ENCODE measurements at regions of chr11 and their contacts with region 1.

Region 1: DNA sequence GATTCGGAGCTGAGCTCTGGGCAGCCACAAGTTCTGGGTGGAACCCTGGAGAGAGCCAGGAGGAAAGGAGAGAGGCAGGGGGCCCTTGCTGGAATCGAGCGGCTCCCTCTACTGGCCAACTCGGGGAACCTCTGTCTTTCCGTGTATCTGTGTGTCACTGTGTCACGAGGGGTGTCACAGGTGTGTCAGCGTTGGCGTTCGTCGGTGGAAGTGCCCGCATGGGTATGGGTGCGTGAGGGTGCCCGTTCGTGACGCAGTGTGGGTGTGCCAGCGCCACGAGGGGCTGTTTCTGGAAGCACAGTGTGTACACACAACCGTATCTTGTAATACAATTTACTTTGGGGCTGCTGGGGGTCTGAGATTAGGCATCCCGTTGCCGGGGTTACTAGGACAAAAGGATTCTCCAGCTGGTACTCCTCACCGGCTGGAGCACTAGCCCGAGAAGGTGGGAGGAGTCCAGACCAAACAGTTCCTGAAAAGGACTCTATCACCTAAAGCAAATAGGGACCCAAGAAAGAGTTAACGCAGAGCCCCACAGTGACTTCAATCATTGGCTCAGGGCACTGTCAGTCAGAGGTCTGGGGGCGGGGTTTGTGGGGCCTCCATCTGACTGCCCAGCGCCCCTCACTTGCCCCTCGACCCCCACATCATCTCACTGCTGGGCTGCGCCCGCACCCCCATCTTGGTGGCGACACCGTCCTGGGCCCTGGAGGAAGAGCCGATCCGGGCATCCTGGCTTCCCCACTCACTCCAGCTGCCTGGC is 2.6 kb upstream of the BCL9L start:
- DNase-seq: peak; percentile 82 to 98 (median 92)

Region 2: GRCh38 chr11:118791111-118791965 is 137.0 kb before region 1 on chr11 and contains the start of gene DDX6:
- intact Hi-C with region 1: loop called (anchors 5 kb)
- DNase-seq: peak; percentile 82 to 98 (median 91)

Measured in posterior cingulate gyrus (tissue), 11 donors.